ENCODE measurements at regions of chr5 and their contacts with region 1.

Region 1: DNA sequence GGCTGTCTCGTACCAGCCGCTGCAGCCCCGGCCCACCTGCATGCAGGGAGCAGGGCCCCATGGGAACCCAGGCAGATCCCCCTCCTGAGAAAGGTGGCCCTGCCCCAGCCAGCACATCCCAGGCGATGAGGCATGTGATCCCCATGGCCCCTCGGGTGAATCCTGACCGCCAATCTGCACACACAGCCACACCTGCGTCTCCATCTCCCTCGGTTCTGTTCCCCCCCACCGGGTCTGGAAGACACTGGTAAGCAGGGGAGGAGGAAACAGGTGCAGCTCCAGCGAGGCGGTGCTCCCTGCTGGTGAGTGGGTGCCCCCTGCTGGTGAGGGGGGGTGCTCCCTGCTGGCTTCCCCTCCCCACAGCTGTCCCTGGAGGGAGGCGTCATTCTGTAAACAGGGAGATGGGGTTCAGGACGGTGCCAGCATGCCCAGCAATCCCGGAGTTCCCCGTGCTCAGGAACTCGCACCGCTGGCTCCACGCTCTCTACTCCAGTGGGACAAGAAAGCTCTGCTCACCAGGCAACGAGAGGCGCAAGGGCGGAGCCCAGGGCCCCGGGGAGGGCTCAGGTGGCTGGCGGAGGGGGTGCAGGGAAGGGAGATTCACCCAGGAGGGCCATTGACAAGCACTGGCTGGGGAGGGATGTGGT is 28.4 kb upstream of the SLC12A7 start:
- DNase-seq: peak; percentile 89
- H3K4me3 ChIP-seq: no peak overlapping the region
- H3K27ac ChIP-seq: no peak overlapping the region
- H3K4me1 ChIP-seq: peaks cover 0 to 23% (median 11%) of the 10 kb centered on the region in 4 donors
- H3K27me3 ChIP-seq: no peaks in the 10 kb centered on the region
- CTCF ChIP-seq: peak; percentile 83 to 94 (median 88)
- EP300 ChIP-seq: no peak
- POLR2A ChIP-seq: no peak

Region 2: GRCh38 chr5:1004461-1005248 is 135.6 kb before region 1 on chr5:
- in situ Hi-C with region 1: loop called in 1 of 4 experiments (anchors 25 kb)
- intact Hi-C with region 1: no loop called
- DNase-seq: peak; percentile 65
- H3K4me3 ChIP-seq: peak overlapping the region; percentile 38 to 54 (median 48)
- H3K27ac ChIP-seq: peak overlapping the region; percentile 44 to 63 (median 50)
- H3K4me1 ChIP-seq: peaks cover 3 to 34% (median 30%) of the 10 kb centered on the region in 4 donors
- H3K27me3 ChIP-seq: peaks cover 51% of the 10 kb centered on the region
- CTCF ChIP-seq: peak in 3 of 5 experiments; percentile 12 to 37 (median 37)
- EP300 ChIP-seq: no peak
- POLR2A ChIP-seq: no peak

Region 3: GRCh38 chr5:1037123-1037670 is 103.1 kb before region 1 on chr5:
- in situ Hi-C with region 1: no loop called
- intact Hi-C with region 1: no loop called
- DNase-seq: no peak
- H3K4me3 ChIP-seq: no peak overlapping the region
- H3K27ac ChIP-seq: no peak overlapping the region
- H3K4me1 ChIP-seq: no peaks in the 10 kb centered on the region
- H3K27me3 ChIP-seq: no peaks in the 10 kb centered on the region
- CTCF ChIP-seq: no peak
- EP300 ChIP-seq: no peak
- POLR2A ChIP-seq: no peak

Region 4: GRCh38 chr5:1930880-1931603 is 790.7 kb after region 1 on chr5:
- in situ Hi-C with region 1: no loop called
- intact Hi-C with region 1: no loop called
- DNase-seq: no peak
- H3K4me3 ChIP-seq: peak overlapping the region in 3 of 4 donors; percentile 19 to 40 (median 32)
- H3K27ac ChIP-seq: peak overlapping the region; percentile 1 to 71 (median 54)
- H3K4me1 ChIP-seq: peaks cover 0 to 12% (median 2%) of the 10 kb centered on the region in 4 donors
- H3K27me3 ChIP-seq: peaks cover 48% of the 10 kb centered on the region
- CTCF ChIP-seq: no peak
- EP300 ChIP-seq: no peak
- POLR2A ChIP-seq: no peak

Measured in transverse colon (tissue), 4 donors.